GM12878 (cell line): ENCODE measurements at regions of chr19 and their contacts with region 1.

Region 1: DNA sequence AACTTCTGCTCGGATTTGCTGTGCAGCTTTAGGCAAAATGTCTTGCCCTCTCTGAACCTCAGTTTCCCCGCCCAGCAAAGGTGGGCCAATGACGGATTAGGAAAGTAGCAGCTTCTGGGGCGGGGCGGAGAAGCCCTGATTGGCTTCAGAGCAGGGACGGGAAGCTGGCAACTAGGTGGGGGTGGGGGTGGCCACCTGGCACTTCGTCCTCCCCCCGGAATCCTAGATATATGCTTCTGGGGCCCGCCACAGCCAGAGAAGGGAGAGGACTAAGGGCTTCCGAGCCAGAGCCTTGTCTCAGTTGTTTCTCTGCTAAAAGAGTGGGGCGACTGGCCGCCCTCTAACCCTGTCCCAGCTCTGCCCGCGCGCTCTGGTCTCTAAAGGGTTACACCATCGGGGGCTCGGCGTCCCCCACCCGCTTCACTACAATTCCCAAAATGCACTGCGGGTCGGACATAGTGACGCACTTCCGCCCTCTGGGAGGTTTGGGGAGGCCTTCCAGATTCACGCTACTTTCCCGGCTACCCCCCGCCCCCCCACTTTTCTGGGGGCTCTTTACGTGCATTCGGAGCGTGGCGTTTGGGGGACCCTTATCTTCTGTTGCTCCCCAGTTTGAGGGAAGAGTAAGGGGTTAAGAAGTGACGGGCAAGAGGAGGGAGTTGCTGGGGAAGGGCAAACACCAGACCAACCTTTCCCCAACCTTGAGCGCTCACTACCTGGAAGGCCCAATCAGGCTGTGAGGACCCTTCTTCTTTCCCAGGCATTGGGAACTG is 672 bp upstream of the IRF2BP1 start:
- DNase-seq: peak; percentile 73
- ATAC-seq: peak; percentile 75
- H3K4me3 ChIP-seq: peak overlapping the region; percentile 68
- H3K27ac ChIP-seq: peak overlapping the region; percentile 95
- H3K4me1 ChIP-seq: peaks cover 20% of the 10 kb centered on the region
- H3K27me3 ChIP-seq: no peaks in the 10 kb centered on the region
- CTCF ChIP-seq: no peak
- EP300 ChIP-seq: no peak; a peak in 1 of 4 replicates
- POLR2A ChIP-seq: peak; percentile 63
- RAD21 ChIP-seq: no peak

Region 2: DNA sequence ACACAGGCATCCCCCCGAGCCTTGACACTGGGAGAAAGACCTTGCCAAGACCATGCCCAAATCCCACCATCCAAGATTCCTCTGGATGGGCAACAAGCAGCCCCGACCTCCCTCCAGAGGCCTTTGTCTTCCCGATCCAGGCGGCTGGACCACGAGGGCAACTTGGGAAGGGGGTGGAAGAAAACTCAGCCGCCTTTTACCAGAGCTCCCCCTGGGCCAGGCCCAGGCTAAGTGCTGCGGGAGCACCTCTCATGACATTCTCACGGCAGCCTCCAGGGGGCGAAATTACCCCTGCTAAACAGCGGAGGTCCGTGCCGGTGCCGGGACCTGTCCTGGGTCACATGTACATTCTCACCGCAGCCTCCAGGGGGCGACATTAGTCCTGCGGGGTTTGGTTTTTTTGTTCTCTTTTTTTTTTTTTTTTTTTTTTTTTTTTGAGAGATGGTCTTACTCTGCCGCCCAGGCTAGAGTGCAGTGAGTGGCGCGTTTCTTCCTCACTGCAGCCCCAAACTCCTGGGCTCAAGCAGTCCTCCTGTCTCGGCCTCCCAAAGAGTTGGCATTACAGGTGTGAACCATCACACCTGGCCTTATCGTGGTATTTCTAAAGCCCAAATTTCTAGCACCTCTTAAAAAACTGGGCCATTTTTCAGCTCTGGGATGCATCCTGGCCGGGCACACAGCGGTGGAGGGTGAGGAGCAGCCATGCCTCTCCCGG is 69.4 kb before region 1 on chr19:
- CTCF ChIA-PET with region 1: interaction called, 28 read pairs
- POLR2A ChIA-PET with region 1: interaction called, 8 read pairs
- RAD21 ChIA-PET with region 1: interaction called, 12 read pairs
- SMC1A ChIA-PET with region 1: interaction called, 9 read pairs
- in situ Hi-C with region 1: no loop called
- intact Hi-C with region 1: loop called (anchors 1 kb)
- DNase-seq: peak; percentile 75
- ATAC-seq: peak; percentile 99
- H3K4me3 ChIP-seq: no peak overlapping the region
- H3K27ac ChIP-seq: no peak overlapping the region
- H3K4me1 ChIP-seq: no peaks in the 10 kb centered on the region
- H3K27me3 ChIP-seq: no peaks in the 10 kb centered on the region
- CTCF ChIP-seq: peak; percentile 96 to 100 (median 98)
- EP300 ChIP-seq: no peak
- POLR2A ChIP-seq: no peak
- RAD21 ChIP-seq: peak; percentile 70

Region 3: DNA sequence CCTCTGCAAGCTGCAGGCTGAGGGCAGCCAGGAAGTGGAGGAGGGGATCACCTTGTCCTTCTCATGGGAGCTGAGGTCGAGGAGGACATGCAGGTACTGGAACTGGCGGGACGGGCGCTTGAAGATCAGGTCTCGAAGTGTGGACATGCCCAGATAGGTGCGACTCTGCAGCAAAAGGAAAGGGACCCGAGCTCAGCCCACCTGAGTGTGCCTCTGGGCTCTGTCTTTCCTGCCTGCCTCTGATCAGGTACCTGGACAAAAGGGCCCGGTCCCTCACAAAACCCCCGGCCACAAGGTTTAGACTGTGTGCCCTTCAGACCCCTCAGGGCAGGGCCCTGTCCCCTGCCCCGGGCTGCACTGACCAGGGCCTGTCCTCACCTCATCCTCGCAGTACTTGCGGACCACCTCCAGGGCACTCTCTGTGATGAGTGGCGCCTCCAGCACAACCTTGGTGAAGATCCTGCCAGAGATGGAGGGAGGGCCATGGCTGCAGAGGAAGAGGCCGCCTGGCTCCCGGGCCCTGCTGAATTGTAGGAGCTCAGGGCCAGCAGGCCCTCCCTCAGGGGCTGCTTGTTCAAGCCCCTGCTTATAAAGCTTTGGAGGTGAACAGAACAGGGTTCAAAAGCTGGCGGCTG is 59.0 kb before region 1 on chr19:
- CTCF ChIA-PET with region 1: no interaction called
- POLR2A ChIA-PET with region 1: no interaction called
- RAD21 ChIA-PET with region 1: no interaction called
- SMC1A ChIA-PET with region 1: no interaction called
- in situ Hi-C with region 1: no loop called
- intact Hi-C with region 1: no loop called
- DNase-seq: no peak
- ATAC-seq: no peak
- H3K4me3 ChIP-seq: no peak overlapping the region
- H3K27ac ChIP-seq: no peak overlapping the region
- H3K4me1 ChIP-seq: no peaks in the 10 kb centered on the region; the same call in 1 of the 2 replicates
- H3K27me3 ChIP-seq: no peaks in the 10 kb centered on the region
- CTCF ChIP-seq: no peak
- EP300 ChIP-seq: no peak
- POLR2A ChIP-seq: no peak; the same call in 1 of the 2 replicates
- RAD21 ChIP-seq: no peak

Region 4: DNA sequence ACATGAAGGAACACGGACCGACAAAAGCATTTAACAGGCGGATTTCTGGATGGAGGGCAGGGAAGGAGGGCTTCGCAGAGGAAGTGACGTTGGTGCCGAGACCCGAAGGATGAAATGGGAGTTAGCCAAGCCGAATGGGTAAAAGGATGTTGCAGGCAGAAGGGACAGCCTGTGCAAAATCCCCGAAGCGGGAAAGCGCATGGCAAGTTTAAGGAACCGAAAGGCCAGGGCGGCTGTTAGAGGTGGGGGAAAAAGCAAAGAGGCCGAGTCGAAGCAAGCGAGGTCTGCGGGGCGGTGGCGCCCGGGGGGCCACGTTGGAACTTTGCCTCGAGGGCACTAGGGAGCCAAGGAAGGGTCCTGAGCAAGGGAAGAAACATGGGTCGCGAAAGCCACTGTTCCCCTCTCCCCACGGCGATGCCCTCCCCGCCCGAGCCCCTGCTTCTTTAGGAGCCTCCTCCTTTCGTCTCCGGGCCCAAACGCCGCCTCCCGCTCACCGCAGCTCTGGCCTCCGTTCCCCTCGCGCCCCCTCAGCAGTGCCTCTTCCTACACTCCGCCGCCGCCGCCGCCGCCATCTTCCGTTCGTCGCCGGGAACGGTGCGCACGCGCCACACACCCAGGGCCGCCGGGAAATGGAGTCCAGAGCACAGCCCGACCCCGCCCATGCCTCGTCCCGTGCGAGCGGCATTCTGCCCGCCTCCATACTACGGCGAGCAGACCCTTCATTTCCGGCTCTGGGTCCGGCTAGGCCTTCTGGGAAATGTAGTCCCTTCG is 23.9 kb before region 1 on chr19 and contains the start of gene SYMPK:
- CTCF ChIA-PET with region 1: interaction called, 194 read pairs
- POLR2A ChIA-PET with region 1: interaction called, 178 read pairs
- RAD21 ChIA-PET with region 1: interaction called, 159 read pairs
- SMC1A ChIA-PET with region 1: interaction called, 98 read pairs
- in situ Hi-C with region 1: no loop called
- intact Hi-C with region 1: loop called (anchors 1 kb)
- DNase-seq: peak; percentile 94
- ATAC-seq: peak; percentile 94
- H3K4me3 ChIP-seq: peak within 1 kb of the TSS; percentile 97
- H3K27ac ChIP-seq: peak within 1 kb of the TSS; percentile 93
- H3K4me1 ChIP-seq: peaks cover 5% of the 10 kb centered on the region
- H3K27me3 ChIP-seq: peaks cover 0 to 6% of the 10 kb centered on the region in 2 experiments; a peak in 2 of 4 replicates
- CTCF ChIP-seq: no peak
- EP300 ChIP-seq: 0 out of 4 replicates have a peak, but pooled peaks of 1 of the 2 experiments have one; percentile 10
- POLR2A ChIP-seq: peak; percentile 92
- RAD21 ChIP-seq: no peak
- polyA plus RNA-seq, gene SYMPK: 0.49 to 0.79 TPM

Region 5: GRCh38 chr19:45870798-45871197 is 15.8 kb before region 1 on chr19:
- CTCF ChIA-PET with region 1: interaction called, 194 read pairs
- POLR2A ChIA-PET with region 1: interaction called, 178 read pairs
- RAD21 ChIA-PET with region 1: interaction called, 159 read pairs
- SMC1A ChIA-PET with region 1: interaction called, 98 read pairs
- in situ Hi-C with region 1: no loop called
- intact Hi-C with region 1: no loop called
- DNase-seq: no peak
- ATAC-seq: no peak
- H3K4me3 ChIP-seq: no peak overlapping the region
- H3K27ac ChIP-seq: no peak overlapping the region
- H3K4me1 ChIP-seq: no peaks in the 10 kb centered on the region; the same call in 1 of the 2 replicates
- H3K27me3 ChIP-seq: no peaks in the 10 kb centered on the region; a peak in 1 of 4 replicates
- CTCF ChIP-seq: no peak
- EP300 ChIP-seq: no peak
- POLR2A ChIP-seq: no peak
- RAD21 ChIP-seq: no peak

Region 6: DNA sequence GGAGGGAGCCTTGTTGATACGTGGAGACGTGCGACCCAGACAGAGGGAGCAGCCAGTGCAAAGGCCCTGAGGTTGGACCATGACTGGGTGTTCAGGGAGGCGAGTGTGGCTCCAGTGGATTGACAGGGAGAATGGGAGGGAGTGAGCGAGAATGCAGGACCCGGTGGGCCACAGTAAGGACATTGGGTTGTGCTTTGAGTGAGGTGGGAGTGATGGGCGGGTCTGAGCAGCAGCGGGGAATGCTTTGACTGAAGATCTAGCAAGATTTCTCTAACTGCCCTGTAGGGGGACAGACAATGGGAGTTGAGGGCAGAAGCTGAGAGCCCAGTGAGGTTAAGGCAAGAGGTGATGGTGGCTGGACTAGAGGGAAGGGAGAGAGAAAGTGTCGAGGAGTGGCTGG is 35.7 kb after region 1 on chr19:
- CTCF ChIA-PET with region 1: no interaction called
- POLR2A ChIA-PET with region 1: no interaction called
- RAD21 ChIA-PET with region 1: no interaction called
- SMC1A ChIA-PET with region 1: no interaction called
- in situ Hi-C with region 1: no loop called
- intact Hi-C with region 1: no loop called
- DNase-seq: no peak
- ATAC-seq: peak; percentile 87
- H3K4me3 ChIP-seq: no peak overlapping the region
- H3K27ac ChIP-seq: no peak overlapping the region
- H3K4me1 ChIP-seq: no peaks in the 10 kb centered on the region
- H3K27me3 ChIP-seq: no peaks in the 10 kb centered on the region
- CTCF ChIP-seq: peak; percentile 2 to 32 (median 29); a peak in 2 of 6 replicates
- EP300 ChIP-seq: no peak
- POLR2A ChIP-seq: no peak
- RAD21 ChIP-seq: no peak

Region 7: DNA sequence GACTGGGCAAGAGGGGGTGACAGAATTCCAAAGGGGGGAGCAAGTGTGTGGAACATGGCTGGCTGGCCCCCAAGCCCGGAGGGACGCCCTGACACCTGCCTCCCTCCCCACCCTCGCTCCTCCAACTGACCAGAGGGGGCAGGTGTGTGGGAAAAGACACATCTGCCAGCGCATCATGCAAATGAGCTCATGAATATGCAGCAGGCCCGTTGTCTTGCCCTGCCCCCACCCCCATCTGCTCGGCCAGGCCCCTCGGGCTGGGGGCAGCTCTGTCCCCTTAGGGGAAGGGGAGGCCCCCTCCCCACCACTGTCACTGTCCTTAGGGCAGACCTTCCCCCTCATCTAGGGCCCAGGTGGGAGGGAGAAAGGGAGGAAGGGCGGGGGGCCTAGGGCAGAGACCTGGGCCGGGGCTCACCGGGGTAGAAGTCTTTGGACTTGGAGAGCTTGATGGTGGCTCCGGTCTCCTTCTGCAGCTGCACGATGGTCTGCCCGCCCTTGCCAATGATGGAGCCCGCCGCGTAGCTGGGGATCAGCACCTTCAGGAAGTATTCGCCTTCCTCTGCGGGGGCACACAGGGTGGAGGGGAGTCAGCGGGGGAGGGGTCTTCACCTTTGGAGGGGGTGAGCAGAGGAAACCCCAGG is 74.1 kb after region 1 on chr19:
- CTCF ChIA-PET with region 1: no interaction called
- POLR2A ChIA-PET with region 1: no interaction called
- RAD21 ChIA-PET with region 1: no interaction called
- SMC1A ChIA-PET with region 1: no interaction called
- in situ Hi-C with region 1: no loop called
- intact Hi-C with region 1: no loop called
- DNase-seq: no peak
- ATAC-seq: peak; percentile 28; the same call in 1 of the 3 replicates
- H3K4me3 ChIP-seq: no peak overlapping the region
- H3K27ac ChIP-seq: no peak overlapping the region
- H3K4me1 ChIP-seq: no peaks in the 10 kb centered on the region
- H3K27me3 ChIP-seq: peaks cover 0 to 2% of the 10 kb centered on the region in 2 experiments; a peak in 1 of 4 replicates
- CTCF ChIP-seq: no peak
- EP300 ChIP-seq: no peak
- POLR2A ChIP-seq: no peak
- RAD21 ChIP-seq: no peak

Region 8: DNA sequence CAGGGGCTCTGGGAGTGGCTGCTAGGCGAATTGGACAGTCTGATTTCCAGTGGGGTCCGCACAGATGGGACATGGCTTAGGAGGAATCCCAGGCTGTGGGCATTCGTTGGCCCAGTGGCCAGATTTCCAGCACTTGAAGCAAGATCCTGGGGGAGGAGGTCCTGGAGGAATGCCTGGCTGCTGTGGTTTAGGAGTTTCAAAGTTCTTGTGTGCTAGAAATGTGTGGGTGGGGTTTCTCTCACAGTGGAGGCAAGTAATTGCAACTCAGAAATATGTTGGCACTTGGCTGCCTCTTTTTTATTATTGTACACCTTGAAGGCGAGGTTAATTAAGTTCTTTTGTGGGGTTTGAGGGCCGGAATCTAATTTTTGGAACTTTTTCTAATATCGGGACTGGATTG is 220.8 kb after region 1 on chr19:
- CTCF ChIA-PET with region 1: no interaction called
- POLR2A ChIA-PET with region 1: no interaction called
- RAD21 ChIA-PET with region 1: no interaction called
- SMC1A ChIA-PET with region 1: no interaction called
- in situ Hi-C with region 1: no loop called
- intact Hi-C with region 1: no loop called
- DNase-seq: no peak
- ATAC-seq: no peak
- H3K4me3 ChIP-seq: no peak overlapping the region
- H3K27ac ChIP-seq: no peak overlapping the region
- H3K4me1 ChIP-seq: no peaks in the 10 kb centered on the region
- H3K27me3 ChIP-seq: no peaks in the 10 kb centered on the region; a peak in 1 of 4 replicates
- CTCF ChIP-seq: no peak
- EP300 ChIP-seq: no peak
- POLR2A ChIP-seq: no peak
- RAD21 ChIP-seq: no peak